Activated CD4-positive, alpha-beta memory T cell treated with anti-CD3 and anti-CD28 coated beads for 36 hours (primary cell): ENCODE measurements at regions of chr11 and their contacts with region 1.

Region 1: GRCh38 chr11:111766093-111766833 is at the start of gene PPP2R1B:
- DNase-seq: peak; percentile 81
- H3K4me3 Mint-ChIP-seq: peak within 1 kb of the TSS; percentile 100
- H3K27ac Mint-ChIP-seq: peak within 1 kb of the TSS; percentile 89
- H3K4me1 Mint-ChIP-seq: peaks cover 34% of the 10 kb centered on the region
- H3K27me3 Mint-ChIP-seq: no peaks in the 10 kb centered on the region
- total RNA-seq, gene PPP2R1B: 49.4 to 51.1 TPM

Region 2: DNA sequence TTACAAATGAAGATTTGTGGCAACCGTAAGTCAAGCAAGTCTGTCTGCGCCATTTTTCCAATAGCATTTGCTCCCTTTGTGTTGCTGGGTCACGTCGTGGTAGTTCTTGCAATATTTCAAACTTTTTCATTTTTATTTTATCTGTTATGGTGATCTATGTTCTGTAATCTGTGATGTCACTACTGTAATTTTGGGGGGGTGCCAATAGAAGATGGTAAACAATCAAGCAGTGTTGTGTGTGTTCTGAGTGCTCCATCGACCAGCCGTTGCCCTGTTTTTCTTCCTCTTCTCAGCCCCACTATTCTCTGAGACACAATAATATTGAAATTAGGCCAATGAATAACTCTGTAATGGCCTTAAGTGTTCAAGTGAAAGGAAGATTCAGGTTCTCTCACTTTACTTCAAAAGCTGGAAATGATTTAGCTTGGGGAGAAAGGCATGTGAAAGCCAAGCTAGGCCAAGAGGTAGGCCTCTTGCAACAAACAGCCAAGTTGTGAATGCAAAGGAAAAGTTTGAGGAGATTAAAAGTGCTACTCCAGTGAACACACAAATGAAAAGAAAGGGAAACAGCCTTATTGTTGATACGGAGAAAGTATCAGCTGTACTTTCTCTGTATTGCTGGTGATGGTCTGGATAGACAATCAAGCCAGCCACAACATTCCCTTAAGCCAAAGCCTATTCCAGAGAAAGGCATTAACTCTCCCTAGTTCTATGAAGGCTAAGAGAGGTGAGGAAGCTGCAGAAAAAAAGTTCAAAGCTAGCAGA is 1665.6 kb before region 1 on chr11:
- CTCF ChIA-PET with region 1: no interaction called
- POLR2A ChIA-PET with region 1: no interaction called
- intact Hi-C with region 1: no loop called
- DNase-seq: no peak
- H3K4me3 Mint-ChIP-seq: no peak overlapping the region
- H3K27ac Mint-ChIP-seq: no peak overlapping the region
- H3K4me1 Mint-ChIP-seq: no peaks in the 10 kb centered on the region
- H3K27me3 Mint-ChIP-seq: peaks cover 15% of the 10 kb centered on the region

Region 3: GRCh38 chr11:111586388-111586831 is 179.9 kb before region 1 on chr11:
- CTCF ChIA-PET with region 1: interaction called, 20 read pairs
- POLR2A ChIA-PET with region 1: interaction called, 3 read pairs
- intact Hi-C with region 1: no loop called
- DNase-seq: peak; percentile 35
- H3K4me3 Mint-ChIP-seq: no peak overlapping the region
- H3K27ac Mint-ChIP-seq: no peak overlapping the region
- H3K4me1 Mint-ChIP-seq: no peaks in the 10 kb centered on the region
- H3K27me3 Mint-ChIP-seq: no peaks in the 10 kb centered on the region

Region 4: DNA sequence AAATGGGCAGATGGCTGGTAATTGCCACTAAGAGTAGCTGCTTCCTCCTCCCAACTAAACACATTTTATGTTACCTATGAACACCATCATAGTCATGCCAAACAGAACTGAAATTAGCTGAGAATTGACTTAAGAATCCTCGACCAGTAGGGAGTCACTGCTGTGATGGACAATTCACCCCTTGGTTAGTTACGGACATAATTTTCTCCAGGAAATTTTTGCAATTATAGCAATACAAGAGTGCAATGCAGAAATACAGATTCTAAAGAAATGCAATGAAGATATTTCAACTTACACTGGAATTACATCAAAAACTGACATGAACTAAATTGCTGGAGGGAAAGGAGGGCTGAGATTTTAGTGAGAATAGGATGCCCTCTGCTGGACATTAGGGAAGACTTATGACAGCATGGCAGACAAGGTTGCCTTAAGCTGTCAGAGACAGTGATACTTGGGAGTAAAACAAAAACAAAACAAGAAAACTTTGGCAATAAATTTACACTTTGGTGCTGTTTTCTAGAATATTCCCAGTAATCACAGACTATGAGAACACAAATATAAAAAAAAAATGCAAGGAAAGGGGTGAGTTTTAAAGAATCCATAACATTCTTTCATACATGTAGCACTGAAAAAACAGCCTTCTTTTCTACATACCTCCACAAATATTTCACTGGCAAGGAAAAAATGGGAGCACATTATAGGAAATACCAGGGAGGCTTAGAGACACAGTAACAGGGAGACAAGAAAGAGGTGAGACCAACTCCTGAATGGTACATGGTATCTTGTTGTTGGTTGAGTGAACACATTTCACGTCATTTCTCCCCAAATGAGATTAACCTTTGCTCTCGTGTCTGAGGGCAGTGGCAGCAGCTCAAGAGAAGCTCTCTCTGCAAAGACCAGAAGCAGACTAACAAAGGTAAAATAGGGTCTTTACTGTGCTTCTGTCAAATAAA is 11.1 kb after region 1 on chr11:
- CTCF ChIA-PET with region 1: interaction called, 39 read pairs
- POLR2A ChIA-PET with region 1: no interaction called
- intact Hi-C with region 1: no loop called
- DNase-seq: no peak
- H3K4me3 Mint-ChIP-seq: no peak overlapping the region
- H3K27ac Mint-ChIP-seq: no peak overlapping the region
- H3K4me1 Mint-ChIP-seq: no peaks in the 10 kb centered on the region
- H3K27me3 Mint-ChIP-seq: no peaks in the 10 kb centered on the region

Region 5: GRCh38 chr11:111870886-111871692 is 104.8 kb after region 1 on chr11 and contains the start of gene ALG9:
- CTCF ChIA-PET with region 1: interaction called, 6 read pairs
- POLR2A ChIA-PET with region 1: no interaction called
- intact Hi-C with region 1: loop called (anchors 2 kb)
- DNase-seq: peak; percentile 92
- H3K4me3 Mint-ChIP-seq: peak within 1 kb of the TSS; percentile 92
- H3K27ac Mint-ChIP-seq: peak within 1 kb of the TSS; percentile 86
- H3K4me1 Mint-ChIP-seq: peaks cover 24% of the 10 kb centered on the region
- H3K27me3 Mint-ChIP-seq: no peaks in the 10 kb centered on the region
- total RNA-seq, gene ALG9: 23.6 to 26.7 TPM